PC-3 (cell line): ENCODE measurements at regions of chr4 and their contacts with region 1.

Region 1: GRCh38 chr4:131091896-131092295 is 1995.9 kb downstream of the C4orf33 start:
- DNase-seq: peak; percentile 64
- ATAC-seq: peak; percentile 58; the same call in 1 of the 2 replicates
- H3K4me3 ChIP-seq: no peak overlapping the region
- H3K27ac ChIP-seq: no peak overlapping the region
- H3K4me1 ChIP-seq: no peaks in the 10 kb centered on the region
- H3K27me3 ChIP-seq: no peaks in the 10 kb centered on the region
- CTCF ChIP-seq: peak; percentile 57

Region 2: GRCh38 chr4:130478406-130478805 is 613.5 kb before region 1 on chr4:
- CTCF ChIA-PET with region 1: no interaction called
- POLR2A ChIA-PET with region 1: no interaction called
- intact Hi-C with region 1: no loop called
- DNase-seq: no peak
- ATAC-seq: no peak
- H3K4me3 ChIP-seq: no peak overlapping the region
- H3K27ac ChIP-seq: no peak overlapping the region
- H3K4me1 ChIP-seq: no peaks in the 10 kb centered on the region
- H3K27me3 ChIP-seq: no peaks in the 10 kb centered on the region
- CTCF ChIP-seq: no peak

Region 3: DNA sequence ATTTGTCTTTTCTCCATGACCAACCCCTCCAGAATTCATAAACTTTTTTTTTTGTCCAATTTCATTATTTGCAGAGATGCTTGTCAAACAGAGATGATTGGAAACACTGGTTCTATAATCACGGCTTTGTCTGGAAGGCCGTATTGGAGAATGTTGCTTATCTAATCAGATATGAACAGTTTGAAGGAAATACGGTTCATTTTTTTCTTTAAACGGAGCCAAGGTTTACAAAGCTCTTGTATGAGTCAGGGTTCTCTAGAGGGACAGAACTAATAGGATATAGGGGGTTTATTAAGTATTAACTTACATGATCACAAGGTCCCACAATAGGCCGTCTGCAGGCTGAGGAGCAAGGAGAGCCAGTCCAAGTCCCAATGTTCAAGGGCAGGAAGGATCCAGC is 580.1 kb before region 1 on chr4:
- CTCF ChIA-PET with region 1: no interaction called
- POLR2A ChIA-PET with region 1: no interaction called
- intact Hi-C with region 1: no loop called
- DNase-seq: no peak
- ATAC-seq: no peak
- H3K4me3 ChIP-seq: no peak overlapping the region
- H3K27ac ChIP-seq: no peak overlapping the region
- H3K4me1 ChIP-seq: no peaks in the 10 kb centered on the region
- H3K27me3 ChIP-seq: no peaks in the 10 kb centered on the region
- CTCF ChIP-seq: no peak

Region 4: GRCh38 chr4:131013226-131013625 is 78.7 kb before region 1 on chr4:
- CTCF ChIA-PET with region 1: no interaction called
- POLR2A ChIA-PET with region 1: no interaction called
- intact Hi-C with region 1: no loop called
- DNase-seq: no peak
- ATAC-seq: no peak
- H3K4me3 ChIP-seq: no peak overlapping the region
- H3K27ac ChIP-seq: no peak overlapping the region
- H3K4me1 ChIP-seq: no peaks in the 10 kb centered on the region
- H3K27me3 ChIP-seq: no peaks in the 10 kb centered on the region
- CTCF ChIP-seq: no peak

Region 5: DNA sequence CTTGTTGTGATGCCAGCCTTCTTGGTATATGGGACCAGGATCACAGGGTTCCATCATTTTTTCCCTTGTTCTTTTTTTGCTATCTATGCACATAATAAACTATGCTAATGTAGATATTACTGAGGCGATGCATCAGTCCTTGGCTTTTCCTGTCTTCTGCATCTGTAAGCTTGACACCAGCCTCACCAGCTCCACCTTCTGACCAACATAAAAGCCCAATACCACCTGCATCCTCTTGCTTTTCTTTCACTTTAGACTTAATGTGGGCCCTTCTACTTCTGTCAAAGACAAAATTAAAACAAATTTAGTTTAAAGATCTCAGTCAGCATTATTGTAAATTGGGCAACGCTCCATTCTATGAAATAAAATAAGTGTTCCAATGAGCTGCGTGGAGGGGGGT is 338.4 kb after region 1 on chr4:
- CTCF ChIA-PET with region 1: no interaction called
- POLR2A ChIA-PET with region 1: no interaction called
- intact Hi-C with region 1: loop called (anchors 2 kb)
- DNase-seq: peak; percentile 10
- ATAC-seq: peak; percentile 53
- H3K4me3 ChIP-seq: no peak overlapping the region
- H3K27ac ChIP-seq: no peak overlapping the region
- H3K4me1 ChIP-seq: no peaks in the 10 kb centered on the region
- H3K27me3 ChIP-seq: no peaks in the 10 kb centered on the region
- CTCF ChIP-seq: peak; percentile 5; the same call in 1 of the 2 replicates

Region 6: GRCh38 chr4:131644619-131645018 is 552.7 kb after region 1 on chr4:
- CTCF ChIA-PET with region 1: no interaction called
- POLR2A ChIA-PET with region 1: no interaction called
- intact Hi-C with region 1: loop called (anchors 5 kb)
- DNase-seq: peak; percentile 38
- ATAC-seq: peak; percentile 79
- H3K4me3 ChIP-seq: no peak overlapping the region
- H3K27ac ChIP-seq: no peak overlapping the region
- H3K4me1 ChIP-seq: no peaks in the 10 kb centered on the region
- H3K27me3 ChIP-seq: no peaks in the 10 kb centered on the region
- CTCF ChIP-seq: peak; percentile 58

Region 7: DNA sequence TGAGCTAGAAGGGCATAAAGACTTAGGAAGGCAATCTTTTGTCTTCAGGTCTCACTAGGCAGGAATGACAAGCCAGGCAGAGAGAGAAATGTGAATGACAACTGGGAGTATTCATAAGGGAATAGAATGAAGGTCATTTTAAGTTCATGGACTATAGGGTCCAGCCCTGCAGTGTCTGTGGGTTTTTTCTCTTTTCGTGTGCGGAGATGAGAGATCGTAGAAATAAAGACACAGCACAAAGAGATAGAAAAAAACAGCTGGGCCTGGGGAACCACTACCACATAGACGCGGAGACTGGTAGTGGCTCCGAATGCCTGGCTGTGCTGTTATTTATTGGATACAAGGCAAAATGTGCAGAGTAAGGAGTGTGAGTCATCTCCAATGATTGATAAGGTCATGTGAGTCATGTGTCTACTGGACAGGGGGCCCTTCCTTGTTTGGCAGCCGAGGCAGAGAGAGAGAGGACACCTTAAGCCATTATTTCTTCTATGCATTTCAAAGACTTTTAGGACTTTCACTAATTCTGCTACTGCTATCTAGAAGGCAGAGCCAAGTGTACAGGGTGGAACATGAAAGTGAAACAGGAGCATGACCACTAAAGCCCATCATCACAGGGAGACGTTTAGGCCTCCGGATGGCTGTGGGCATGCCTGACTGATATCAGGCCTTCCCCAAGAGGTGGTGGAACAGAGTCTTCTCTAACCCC is 1135.4 kb after region 1 on chr4:
- CTCF ChIA-PET with region 1: no interaction called
- POLR2A ChIA-PET with region 1: no interaction called
- intact Hi-C with region 1: loop called (anchors 2 kb)
- DNase-seq: peak; percentile 37
- ATAC-seq: peak; percentile 77
- H3K4me3 ChIP-seq: peak overlapping the region; percentile 62
- H3K27ac ChIP-seq: no peak overlapping the region
- H3K4me1 ChIP-seq: no peaks in the 10 kb centered on the region
- H3K27me3 ChIP-seq: no peaks in the 10 kb centered on the region
- CTCF ChIP-seq: no peak

Region 8: GRCh38 chr4:132614682-132615081 is 1522.8 kb after region 1 on chr4:
- CTCF ChIA-PET with region 1: no interaction called
- POLR2A ChIA-PET with region 1: no interaction called
- intact Hi-C with region 1: loop called (anchors 10 kb)
- DNase-seq: no peak
- ATAC-seq: no peak
- H3K4me3 ChIP-seq: no peak overlapping the region
- H3K27ac ChIP-seq: no peak overlapping the region
- H3K4me1 ChIP-seq: no peaks in the 10 kb centered on the region
- H3K27me3 ChIP-seq: no peaks in the 10 kb centered on the region
- CTCF ChIP-seq: peak; percentile 50